Esophagus muscularis mucosa (tissue), 4 donors: ENCODE measurements at regions of chr1 and their contacts with region 1.

Region 1: DNA sequence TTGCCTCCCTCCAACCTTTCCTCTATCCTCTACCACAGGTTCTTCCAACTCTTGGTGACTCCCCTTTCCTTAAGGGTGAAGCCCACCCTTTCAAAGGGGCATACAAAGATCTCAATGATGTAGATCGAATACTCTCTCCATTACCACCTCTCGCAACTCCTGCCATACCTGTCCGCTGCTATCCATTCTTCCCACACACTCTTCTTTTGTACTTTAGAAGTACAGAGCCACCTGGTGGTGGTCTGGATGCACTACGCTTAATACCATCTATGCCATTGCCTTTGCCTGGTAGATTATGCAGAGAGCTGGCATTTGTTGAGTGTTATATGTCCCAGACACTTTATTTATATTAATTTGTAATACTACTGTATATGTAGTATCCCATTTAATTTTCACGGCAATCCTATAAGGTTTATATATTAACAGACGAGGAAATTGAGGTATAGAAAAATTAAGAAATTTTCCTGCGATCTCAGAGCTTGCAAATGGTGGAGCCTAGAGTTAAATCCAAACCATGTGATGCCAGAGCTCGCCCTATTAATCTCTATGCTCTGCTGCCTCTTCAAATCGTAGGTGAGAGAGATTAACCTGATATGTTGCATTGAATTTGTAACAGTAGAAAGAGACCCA is 22.9 kb downstream of the TSHB start:
- DNase-seq: no peak
- H3K4me3 ChIP-seq: no peak overlapping the region
- H3K27ac ChIP-seq: peak overlapping the region in 1 of 4 donors; percentile 8
- H3K4me1 ChIP-seq: peaks cover 0 to 22% (median 19%) of the 10 kb centered on the region in 4 donors
- H3K27me3 ChIP-seq: no peaks in the 10 kb centered on the region
- CTCF ChIP-seq: peak; percentile 76 to 85 (median 78)
- EP300 ChIP-seq: no peak
- POLR2A ChIP-seq: no peak

Region 2: GRCh38 chr1:114861384-114861783 is 191.2 kb before region 1 on chr1:
- intact Hi-C with region 1: no loop called
- DNase-seq: no peak
- H3K4me3 ChIP-seq: no peak overlapping the region
- H3K27ac ChIP-seq: no peak overlapping the region
- H3K4me1 ChIP-seq: no peaks in the 10 kb centered on the region
- H3K27me3 ChIP-seq: peaks cover 0 to 12% (median 0%) of the 10 kb centered on the region in 4 donors
- CTCF ChIP-seq: no peak
- EP300 ChIP-seq: no peak
- POLR2A ChIP-seq: no peak

Region 3: GRCh38 chr1:114979278-114979891 is 73.2 kb before region 1 on chr1:
- intact Hi-C with region 1: loop called (anchors 2 kb)
- DNase-seq: no peak
- H3K4me3 ChIP-seq: no peak overlapping the region
- H3K27ac ChIP-seq: no peak overlapping the region
- H3K4me1 ChIP-seq: no peaks in the 10 kb centered on the region
- H3K27me3 ChIP-seq: no peaks in the 10 kb centered on the region
- CTCF ChIP-seq: peak; percentile 86 to 87 (median 87)
- EP300 ChIP-seq: no peak
- POLR2A ChIP-seq: no peak

Region 4: DNA sequence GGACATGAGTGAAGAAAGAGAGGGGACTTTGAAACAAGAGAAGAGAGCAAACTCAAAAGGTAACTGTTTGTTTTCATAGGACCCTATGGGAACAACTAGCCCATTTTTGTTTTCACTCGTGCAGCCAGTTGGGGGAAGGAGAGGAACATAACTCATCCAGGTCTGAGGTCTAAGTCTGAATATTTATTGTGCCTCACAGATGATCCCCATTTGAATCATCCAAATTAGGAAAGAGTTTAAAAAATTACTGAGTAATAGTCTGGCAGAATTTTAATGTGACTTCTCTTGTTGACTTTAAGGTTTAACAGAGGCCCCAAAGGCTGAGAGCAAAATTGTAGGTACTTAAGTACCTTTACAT is 47.1 kb after region 1 on chr1:
- intact Hi-C with region 1: loop called (anchors 5 kb)
- DNase-seq: no peak
- H3K4me3 ChIP-seq: peak overlapping the region; percentile 38 to 53 (median 49)
- H3K27ac ChIP-seq: peak overlapping the region; percentile 83 to 87 (median 86)
- H3K4me1 ChIP-seq: peaks cover 0 to 21% (median 17%) of the 10 kb centered on the region in 4 donors
- H3K27me3 ChIP-seq: no peaks in the 10 kb centered on the region
- CTCF ChIP-seq: no peak
- EP300 ChIP-seq: no peak
- POLR2A ChIP-seq: no peak

Region 5: GRCh38 chr1:115112496-115113375 is 60.2 kb after region 1 on chr1:
- intact Hi-C with region 1: loop called (anchors 5 kb)
- DNase-seq: no peak
- H3K4me3 ChIP-seq: no peak overlapping the region
- H3K27ac ChIP-seq: no peak overlapping the region
- H3K4me1 ChIP-seq: peaks cover 0 to 16% (median 5%) of the 10 kb centered on the region in 4 donors
- H3K27me3 ChIP-seq: no peaks in the 10 kb centered on the region
- CTCF ChIP-seq: peak; percentile 94 to 97 (median 97)
- EP300 ChIP-seq: no peak
- POLR2A ChIP-seq: no peak

Region 6: GRCh38 chr1:115811140-115811828 is 758.7 kb after region 1 on chr1:
- intact Hi-C with region 1: no loop called
- DNase-seq: no peak
- H3K4me3 ChIP-seq: no peak overlapping the region
- H3K27ac ChIP-seq: no peak overlapping the region
- H3K4me1 ChIP-seq: peaks cover 0 to 7% (median 0%) of the 10 kb centered on the region in 4 donors
- H3K27me3 ChIP-seq: no peaks in the 10 kb centered on the region
- CTCF ChIP-seq: no peak
- EP300 ChIP-seq: no peak
- POLR2A ChIP-seq: no peak